Dorsolateral prefrontal cortex (tissue), 120 donors: ENCODE measurements at regions of chr1 and their contacts with region 1.

Region 1: GRCh38 chr1:18592367-18592766 is 38.3 kb upstream of the PAX7 start:
- DNase-seq: no peak
- H3K4me3 ChIP-seq: no peak overlapping the region
- H3K27ac ChIP-seq: no peak overlapping the region
- H3K27me3 ChIP-seq: peaks cover 0 to 32% (median 5%) of the 10 kb centered on the region in 45 donors
- CTCF ChIP-seq: no peak

Region 2: GRCh38 chr1:18875107-18875795 is 282.9 kb after region 1 on chr1:
- intact Hi-C with region 1: loop called (anchors 2 to 5 kb)
- DNase-seq: peak; percentile 75 to 92 (median 86)
- H3K4me3 ChIP-seq: no peak overlapping the region
- H3K27ac ChIP-seq: no peak overlapping the region
- H3K27me3 ChIP-seq: no peaks in the 10 kb centered on the region
- CTCF ChIP-seq: peak; percentile 58 to 91 (median 85)

Region 3: GRCh38 chr1:19240673-19241538 is 648.5 kb after region 1 on chr1:
- intact Hi-C with region 1: no loop called
- DNase-seq: peak in 9 of 10 donors; percentile 32 to 73 (median 60)
- H3K4me3 ChIP-seq: no peak overlapping the region
- H3K27ac ChIP-seq: peak overlapping the region in 52 of 59 donors; percentile 1 to 82 (median 56)
- H3K27me3 ChIP-seq: no peaks in the 10 kb centered on the region
- CTCF ChIP-seq: peak; percentile 72 to 99 (median 94)